AG04449 (cell line): ENCODE measurements at regions of chr13 and their contacts with region 1.

Region 1: GRCh38 chr13:29730253-29730652 is 120.2 kb downstream of the UBL3 start:
- DNase-seq: no peak
- H3K4me3 ChIP-seq: no peak overlapping the region
- CTCF ChIP-seq: no peak

Region 2: DNA sequence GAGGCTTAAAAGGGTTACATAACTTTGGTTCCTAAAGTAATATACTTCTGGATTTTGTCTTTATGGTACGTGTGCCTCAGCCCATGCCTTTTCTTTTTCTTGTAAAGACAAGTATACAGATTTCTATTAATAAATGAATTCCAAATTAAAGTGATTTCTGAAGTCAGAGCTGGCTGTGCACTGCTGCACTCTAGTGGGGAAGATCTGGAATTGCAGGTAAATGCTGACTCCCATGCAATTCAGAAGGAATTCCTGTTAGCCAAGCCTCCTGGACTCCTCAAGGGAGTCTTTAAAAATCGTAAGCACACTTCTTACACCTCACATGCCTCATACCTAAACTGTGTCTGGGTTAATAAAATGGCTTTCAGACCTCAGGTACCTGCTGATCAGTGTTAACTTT is 16.4 kb before region 1 on chr13:
- CTCF ChIA-PET with region 1: interaction called, 19 read pairs
- POLR2A ChIA-PET with region 1: no interaction called
- DNase-seq: no peak
- H3K4me3 ChIP-seq: no peak overlapping the region
- CTCF ChIP-seq: peak; percentile 31